Activated CD4-positive, alpha-beta T cell treated with anti-CD3 and anti-CD28 coated beads, Interleukin-2, amount 10 ng/mL, durations not matched to agents 24 days and 14 days (primary cell): ENCODE measurements at regions of chr6 and their contacts with region 1.

Region 1: GRCh38 chr6:159726918-159727716 is at the start of gene WTAP:
- DNase-seq: peak; percentile 98
- H3K4me3 Mint-ChIP-seq: peak within 1 kb of the TSS; percentile 96
- H3K27ac Mint-ChIP-seq: peak within 1 kb of the TSS; percentile 98
- H3K4me1 Mint-ChIP-seq: peaks cover 34% of the 10 kb centered on the region
- H3K27me3 Mint-ChIP-seq: no peaks in the 10 kb centered on the region
- total RNA-seq, gene WTAP: 107 and 109 TPM in 2 replicates

Region 2: GRCh38 chr6:159715166-159715565 is 12.0 kb before region 1 on chr6:
- intact Hi-C with region 1: no loop called
- DNase-seq: no peak
- H3K4me3 Mint-ChIP-seq: no peak overlapping the region
- H3K27ac Mint-ChIP-seq: no peak overlapping the region
- H3K4me1 Mint-ChIP-seq: peaks cover 15% of the 10 kb centered on the region
- H3K27me3 Mint-ChIP-seq: no peaks in the 10 kb centered on the region

Region 3: DNA sequence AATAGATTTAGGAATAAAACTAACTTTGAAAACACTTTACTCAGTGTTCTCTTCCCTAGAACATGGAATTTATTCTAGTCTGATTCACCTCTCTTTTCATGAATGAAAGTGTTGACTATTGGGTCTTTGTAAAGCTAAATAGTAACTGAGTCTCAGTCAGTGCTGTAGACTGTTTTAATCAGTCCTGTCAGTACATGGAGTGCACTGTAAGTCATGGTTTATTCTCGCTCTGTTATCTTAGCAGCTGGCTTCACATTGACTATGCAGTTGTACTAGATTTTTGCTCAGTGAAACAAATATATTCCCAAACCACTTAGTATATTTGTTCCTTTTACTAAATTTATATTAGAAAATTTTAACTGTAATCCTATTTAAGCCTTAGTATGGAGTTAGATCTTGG is 19.6 kb after region 1 on chr6:
- intact Hi-C with region 1: loop called (anchors 2 kb)
- DNase-seq: no peak
- H3K4me3 Mint-ChIP-seq: no peak overlapping the region
- H3K27ac Mint-ChIP-seq: no peak overlapping the region
- H3K4me1 Mint-ChIP-seq: peaks cover 7% of the 10 kb centered on the region
- H3K27me3 Mint-ChIP-seq: no peaks in the 10 kb centered on the region

Region 4: DNA sequence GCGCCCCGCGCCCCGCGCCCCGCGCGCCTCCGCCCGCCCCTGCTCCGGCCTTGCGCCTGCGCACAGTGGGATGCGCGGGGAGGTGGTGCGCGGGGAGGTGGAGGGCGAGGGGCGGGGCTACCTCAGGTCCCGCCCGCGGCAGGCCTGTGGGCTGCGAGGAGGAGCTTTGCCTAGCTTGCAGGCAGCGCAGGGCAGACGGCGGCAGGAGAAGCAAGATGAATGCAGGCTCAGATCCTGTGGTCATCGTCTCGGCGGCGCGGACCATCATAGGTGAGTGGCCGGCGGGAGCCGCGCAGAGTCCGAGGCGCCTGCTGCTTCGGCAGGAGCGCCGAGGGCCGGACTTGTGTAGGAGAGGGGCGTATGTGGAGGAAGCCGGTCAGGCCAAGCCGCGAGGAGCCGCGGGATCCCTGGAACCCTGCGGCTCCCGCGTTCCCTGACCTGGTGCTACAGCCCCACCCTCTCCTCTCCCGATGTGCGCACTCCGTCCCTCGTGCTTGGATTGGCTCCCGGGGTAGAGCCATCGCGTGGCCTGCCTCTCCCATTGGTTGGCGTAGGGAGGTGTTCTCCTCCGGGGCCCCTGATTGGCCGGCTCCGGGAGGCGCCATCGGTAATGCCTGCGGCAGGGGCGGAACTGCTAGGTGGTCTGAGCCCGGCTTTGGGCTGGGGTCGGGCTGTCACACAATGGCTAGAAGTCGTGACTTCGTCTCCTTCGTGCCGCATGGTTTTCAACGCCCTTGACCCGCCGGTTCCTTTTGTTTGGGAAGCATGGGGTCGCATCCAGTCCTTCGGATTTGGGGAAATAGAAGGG is 35.0 kb after region 1 on chr6 and contains the start of gene ACAT2:
- intact Hi-C with region 1: loop called (anchors 1 kb)
- DNase-seq: peak; percentile 98
- H3K4me3 Mint-ChIP-seq: peak within 1 kb of the TSS; percentile 94
- H3K27ac Mint-ChIP-seq: peak within 1 kb of the TSS; percentile 98
- H3K4me1 Mint-ChIP-seq: peaks cover 42% of the 10 kb centered on the region
- H3K27me3 Mint-ChIP-seq: no peaks in the 10 kb centered on the region
- total RNA-seq, gene ACAT2: 85.3 and 88.2 TPM in 2 replicates